Lower lobe of right lung (tissue), 2 donors: ENCODE measurements at regions of chr12 and their contacts with region 1.

Region 1: DNA sequence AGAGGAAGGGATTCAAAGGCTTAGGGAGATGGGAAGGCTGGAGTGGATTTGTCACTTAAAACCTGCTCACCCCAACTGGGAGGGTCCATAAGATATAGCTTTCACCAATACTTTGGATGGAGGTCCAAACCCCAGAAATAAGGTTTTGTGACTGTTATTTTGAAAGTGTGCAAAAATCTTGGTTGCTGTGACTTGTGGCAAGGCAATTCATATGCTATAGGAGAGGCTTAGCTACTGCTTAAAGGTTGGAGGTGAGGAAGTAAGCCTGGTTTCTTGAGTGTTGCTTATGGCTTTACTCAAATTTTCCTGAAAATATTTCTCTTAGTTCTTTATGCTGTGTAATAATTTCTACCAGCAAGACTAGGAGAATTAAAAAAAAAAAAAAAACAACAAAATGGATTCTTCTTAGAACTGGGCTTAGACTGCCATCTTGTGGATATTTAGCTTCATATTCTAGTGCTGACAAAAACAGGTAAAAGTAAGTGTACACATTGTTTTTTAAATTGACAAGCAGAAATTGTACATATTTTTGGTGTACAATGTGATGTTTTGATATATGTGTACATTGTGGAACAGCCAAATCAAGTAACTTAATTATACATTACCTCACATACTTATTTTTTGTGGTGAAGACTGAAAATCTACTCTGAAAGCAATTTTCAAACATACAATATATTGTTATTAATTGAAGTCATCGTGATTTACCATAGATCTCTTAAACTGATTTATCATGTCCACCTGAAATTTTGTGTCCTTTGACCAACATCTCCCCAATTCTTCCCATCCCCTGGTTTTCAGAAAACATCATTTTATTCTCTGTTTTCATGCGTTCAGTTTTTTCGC is 23.0 kb downstream of the PDE6H start:
- DNase-seq: no peak
- ATAC-seq: peak; percentile 74 to 81
- H3K4me3 ChIP-seq: no peak overlapping the region
- H3K27ac ChIP-seq: peak overlapping the region; percentile 15
- H3K4me1 ChIP-seq: peaks cover 16% of the 10 kb centered on the region
- H3K27me3 ChIP-seq: no peaks in the 10 kb centered on the region
- CTCF ChIP-seq: peak; percentile 61

Region 2: DNA sequence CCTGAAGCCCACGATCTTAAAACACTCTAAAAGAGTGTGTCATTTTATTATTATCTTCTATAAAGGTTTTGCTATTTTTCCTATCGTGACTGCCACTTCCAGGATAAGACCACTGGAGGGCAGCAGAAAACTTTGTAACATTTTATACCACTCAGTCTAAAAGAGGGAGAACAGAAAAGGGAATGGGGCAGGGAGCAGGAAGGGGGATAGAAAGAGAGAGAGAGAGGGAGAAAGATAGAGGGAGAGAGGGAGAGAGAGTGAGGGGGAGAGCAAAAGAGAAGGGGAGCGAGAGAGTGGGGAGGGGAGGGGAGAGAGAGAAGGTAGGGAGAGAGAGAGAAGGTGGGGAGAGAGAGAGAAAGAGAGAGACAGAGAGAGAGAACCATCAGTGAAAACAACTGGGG is 150.5 kb before region 1 on chr12:
- intact Hi-C with region 1: loop called (anchors 5 kb)
- DNase-seq: no peak
- ATAC-seq: peak; percentile 79 to 85
- H3K4me3 ChIP-seq: no peak overlapping the region
- H3K27ac ChIP-seq: no peak overlapping the region
- H3K4me1 ChIP-seq: peaks cover 45% of the 10 kb centered on the region
- H3K27me3 ChIP-seq: no peaks in the 10 kb centered on the region
- CTCF ChIP-seq: peak; percentile 68

Region 3: DNA sequence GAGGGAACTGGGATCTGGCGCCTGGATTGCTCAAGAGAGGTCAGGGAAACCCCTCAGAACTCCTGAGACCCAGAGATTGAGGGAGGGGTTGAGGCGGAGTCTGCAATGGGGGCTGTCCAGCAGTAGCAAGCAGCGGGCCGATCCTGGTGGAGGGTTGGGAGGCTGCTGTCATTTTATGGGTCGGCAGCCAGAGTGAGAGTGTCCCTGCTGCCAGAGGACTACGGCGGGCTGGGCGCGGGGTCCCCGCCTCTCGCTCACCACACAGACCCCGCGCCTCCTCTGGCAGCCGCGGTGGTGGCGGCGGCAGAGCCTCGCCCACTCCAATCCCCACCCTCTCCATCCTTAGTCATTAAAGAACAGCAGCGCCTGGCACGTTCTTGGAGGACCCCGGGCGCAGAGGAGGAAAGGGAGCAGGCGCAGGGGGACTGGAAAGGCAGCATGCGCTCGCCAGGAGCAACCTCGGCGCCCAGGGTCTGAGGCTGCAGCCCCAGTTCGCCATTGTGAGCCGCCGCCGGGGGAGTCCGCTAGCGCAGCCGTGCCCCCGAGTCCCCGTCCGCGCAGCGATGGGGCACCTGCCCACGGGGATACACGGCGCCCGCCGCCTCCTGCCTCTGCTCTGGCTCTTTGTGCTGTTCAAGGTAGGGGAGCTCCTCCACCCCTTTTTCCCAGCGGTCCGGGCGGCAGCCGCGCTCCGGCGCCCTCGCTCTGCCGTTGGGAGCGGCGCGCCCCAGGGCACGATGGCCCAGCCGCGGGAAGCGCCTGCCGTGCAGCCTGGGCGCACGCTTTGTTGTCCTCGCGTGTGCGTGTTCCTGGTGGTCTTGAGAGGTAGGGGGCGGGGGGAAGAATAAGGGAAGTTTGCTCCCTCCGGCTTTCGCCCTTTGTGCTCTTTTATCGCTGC is 326.6 kb after region 1 on chr12 and contains the start of gene PTPRO:
- intact Hi-C with region 1: no loop called
- DNase-seq: no peak
- ATAC-seq: peak; percentile 41 to 62
- H3K4me3 ChIP-seq: peak within 1 kb of the TSS; percentile 39
- H3K27ac ChIP-seq: no peak within 1 kb of the TSS
- H3K4me1 ChIP-seq: peaks cover 6% of the 10 kb centered on the region
- H3K27me3 ChIP-seq: peaks cover 37% of the 10 kb centered on the region
- CTCF ChIP-seq: no peak
- total RNA-seq, gene PTPRO: 21.4 TPM